ENCODE measurements at regions of chr15 and their contacts with region 1.

Region 1: DNA sequence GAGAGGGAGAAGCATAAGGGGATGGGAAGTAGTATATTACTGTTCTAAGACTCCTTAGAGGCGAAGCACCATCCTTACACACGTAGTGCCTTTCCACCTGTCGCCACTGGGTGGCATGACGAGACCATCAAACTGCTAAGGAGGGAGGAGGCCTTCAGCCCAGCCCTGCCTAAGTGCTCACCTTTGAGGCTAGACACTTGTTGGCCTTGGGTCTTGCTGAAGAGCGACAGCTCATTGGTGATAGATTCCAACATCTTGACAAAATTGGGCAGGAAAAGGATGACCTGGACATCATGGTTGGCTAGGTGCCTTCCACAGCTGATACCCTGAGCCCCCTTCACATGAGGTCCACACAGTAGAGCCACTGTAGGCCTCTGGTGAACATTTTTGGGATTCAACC is 19.6 kb downstream of the CLK3 start:
- DNase-seq: peak; percentile 80
- ATAC-seq: peak; percentile 83
- H3K4me3 Mint-ChIP-seq: no peak overlapping the region
- H3K27ac Mint-ChIP-seq: no peak overlapping the region
- H3K4me1 Mint-ChIP-seq: no peaks in the 10 kb centered on the region
- H3K27me3 Mint-ChIP-seq: no peaks in the 10 kb centered on the region
- CTCF ChIP-seq: peak; percentile 84

Region 2: GRCh38 chr15:74549816-74550215 is 85.4 kb before region 1 on chr15:
- CTCF ChIA-PET with region 1: no interaction called
- POLR2A ChIA-PET with region 1: no interaction called
- DNase-seq: no peak
- ATAC-seq: no peak
- H3K4me3 Mint-ChIP-seq: no peak overlapping the region
- H3K27ac Mint-ChIP-seq: peak overlapping the region; percentile 17
- H3K4me1 Mint-ChIP-seq: peaks cover 30% of the 10 kb centered on the region
- H3K27me3 Mint-ChIP-seq: no peaks in the 10 kb centered on the region
- CTCF ChIP-seq: no peak

Region 3: DNA sequence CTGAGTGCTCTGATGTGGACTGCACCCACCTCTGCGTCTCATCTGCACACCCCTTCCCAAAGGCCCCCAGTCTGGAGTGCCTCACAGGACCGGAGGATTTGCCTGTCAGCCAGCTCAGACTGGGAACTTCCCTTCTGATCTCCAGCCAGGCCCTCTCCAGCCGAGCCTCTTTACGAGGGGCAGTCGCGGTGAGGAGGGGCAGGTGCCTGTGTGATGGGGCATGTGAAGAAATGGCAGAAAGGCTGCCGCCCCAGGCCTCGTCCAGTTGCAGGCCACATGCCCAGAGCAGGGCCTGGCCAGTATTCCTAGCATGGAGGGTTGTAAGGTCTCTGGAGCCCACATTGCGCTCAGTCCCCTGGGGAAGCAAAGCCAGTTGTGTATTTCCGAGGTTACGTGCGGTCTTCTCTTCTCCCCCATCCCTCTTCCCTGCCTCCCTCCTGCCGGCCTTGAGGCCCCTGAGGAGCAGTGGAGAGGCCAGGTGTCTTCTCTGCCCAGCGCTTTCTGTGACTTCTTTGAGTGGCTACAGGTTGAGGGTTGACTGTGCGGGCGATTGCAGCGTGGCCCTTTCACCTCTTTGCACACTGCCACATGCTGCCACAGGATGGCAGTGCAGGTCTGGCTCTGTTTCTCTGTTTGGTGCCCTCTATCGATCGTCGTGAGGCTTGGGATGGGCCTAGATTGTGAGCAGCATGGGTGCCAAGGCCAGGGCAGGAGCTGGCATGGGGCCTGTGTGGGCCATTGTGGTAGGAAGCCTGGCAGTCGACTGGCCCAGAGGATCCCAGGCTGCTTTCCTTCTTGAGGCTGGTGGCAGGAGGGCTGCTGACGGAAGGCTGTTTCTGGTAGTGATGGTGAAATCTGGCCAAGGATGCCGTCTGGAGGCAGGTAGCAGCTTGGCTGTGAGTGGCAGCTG is 14.3 kb before region 1 on chr15:
- CTCF ChIA-PET with region 1: interaction called, 87 read pairs
- POLR2A ChIA-PET with region 1: no interaction called
- DNase-seq: peak; percentile 83
- ATAC-seq: peak; percentile 88
- H3K4me3 Mint-ChIP-seq: no peak overlapping the region
- H3K27ac Mint-ChIP-seq: peak overlapping the region; percentile 70
- H3K4me1 Mint-ChIP-seq: peaks cover 22% of the 10 kb centered on the region
- H3K27me3 Mint-ChIP-seq: no peaks in the 10 kb centered on the region
- CTCF ChIP-seq: peak; percentile 80

Region 4: DNA sequence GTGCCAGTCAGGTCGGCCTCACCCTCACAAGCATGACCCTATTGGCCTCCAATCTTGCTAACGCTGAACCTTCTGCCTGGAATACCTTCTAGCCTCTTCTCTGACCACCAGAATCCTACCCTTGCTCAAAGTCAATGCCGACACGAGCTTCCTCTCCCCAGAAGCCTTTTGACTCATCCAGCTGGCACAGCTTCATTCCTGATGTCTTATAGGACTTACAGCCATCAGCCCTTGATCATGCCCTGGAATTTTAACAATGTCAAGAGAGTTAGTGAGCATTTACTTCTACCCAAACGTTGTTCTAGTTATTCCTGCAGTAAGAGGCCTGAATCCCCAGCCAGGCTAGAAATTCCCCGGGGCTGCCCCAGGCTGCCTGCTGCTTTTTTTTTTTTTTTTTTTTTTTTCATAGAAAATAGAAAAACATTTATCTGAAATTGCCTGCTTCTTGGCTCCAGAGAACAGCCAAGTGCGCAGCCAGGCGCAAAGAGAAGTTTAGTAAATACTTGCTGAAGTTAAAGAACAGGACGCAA is 117.3 kb after region 1 on chr15:
- CTCF ChIA-PET with region 1: interaction called, 32 read pairs
- POLR2A ChIA-PET with region 1: interaction called, 3 read pairs
- DNase-seq: no peak
- ATAC-seq: no peak
- H3K4me3 Mint-ChIP-seq: no peak overlapping the region
- H3K27ac Mint-ChIP-seq: no peak overlapping the region
- H3K4me1 Mint-ChIP-seq: peaks cover 7% of the 10 kb centered on the region; the same call in 1 of the 2 replicates
- H3K27me3 Mint-ChIP-seq: peaks cover 1% of the 10 kb centered on the region; the same call in 1 of the 2 replicates
- CTCF ChIP-seq: no peak

Region 5: GRCh38 chr15:74781431-74782258 is 146.4 kb after region 1 on chr15 and contains the start of gene CSK:
- CTCF ChIA-PET with region 1: interaction called, 16 read pairs
- POLR2A ChIA-PET with region 1: no interaction called
- DNase-seq: peak; percentile 58
- ATAC-seq: peak; percentile 66
- H3K4me3 Mint-ChIP-seq: peak within 1 kb of the TSS; percentile 83
- H3K27ac Mint-ChIP-seq: no peak within 1 kb of the TSS
- H3K4me1 Mint-ChIP-seq: peaks cover 50% of the 10 kb centered on the region
- H3K27me3 Mint-ChIP-seq: peaks cover 26% of the 10 kb centered on the region
- CTCF ChIP-seq: peak; percentile 49; the same call in 1 of the 2 replicates
- total RNA-seq, gene CSK: 55.1 to 55.9 TPM (median 55.3 TPM) in 3 replicates

Region 6: GRCh38 chr15:74799856-74800547 is 164.8 kb after region 1 on chr15:
- CTCF ChIA-PET with region 1: interaction called, 11 read pairs
- POLR2A ChIA-PET with region 1: no interaction called
- DNase-seq: peak; percentile 90
- ATAC-seq: peak; percentile 98
- H3K4me3 Mint-ChIP-seq: no peak overlapping the region
- H3K27ac Mint-ChIP-seq: peak overlapping the region; percentile 36; the same call in 1 of the 2 replicates
- H3K4me1 Mint-ChIP-seq: 0 out of 2 replicates have a peak, but pooled peaks cover 2% of the 10 kb centered on the region
- H3K27me3 Mint-ChIP-seq: no peaks in the 10 kb centered on the region
- CTCF ChIP-seq: peak; percentile 98

Region 7: DNA sequence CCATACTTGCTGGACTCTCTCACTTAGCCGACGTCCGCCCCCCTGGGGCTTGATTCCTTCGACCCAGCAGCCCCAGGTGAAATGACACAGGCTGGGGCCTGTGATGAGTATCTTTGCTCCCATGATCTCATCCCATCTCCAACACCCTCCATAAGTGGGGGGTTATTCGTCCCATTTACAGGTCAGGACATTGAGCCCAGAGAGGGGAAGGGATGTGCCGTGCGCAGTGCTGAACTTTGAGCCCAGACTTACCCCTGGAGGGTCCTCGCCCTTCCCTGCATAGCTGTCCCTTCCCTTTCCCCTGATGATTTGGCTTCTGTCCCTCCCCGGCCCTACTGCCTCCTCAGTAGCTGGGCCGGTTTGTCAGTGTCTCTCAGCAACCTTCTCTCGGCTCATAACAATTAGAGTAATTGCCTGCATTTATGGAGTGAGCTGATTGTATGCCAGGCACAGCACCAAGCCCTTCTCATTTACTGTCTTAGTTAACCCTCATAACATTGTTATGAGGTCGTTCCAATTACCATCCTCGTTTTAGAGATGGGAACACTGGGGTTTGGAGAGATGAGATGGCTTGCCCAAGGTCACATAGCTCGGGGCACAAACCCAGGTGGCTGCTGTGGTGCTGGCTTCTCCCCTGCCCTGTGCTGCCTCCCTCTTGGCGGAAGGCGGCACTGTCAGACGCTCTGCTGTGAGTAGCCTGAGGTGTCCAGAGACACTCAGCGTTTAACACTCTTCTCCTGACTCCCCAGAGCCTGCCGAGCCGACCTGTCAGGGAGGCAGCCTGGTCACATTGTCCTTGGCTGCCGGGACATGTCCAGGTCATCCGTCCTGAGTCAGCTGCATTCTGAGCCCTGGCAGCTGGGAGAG is 181.8 kb after region 1 on chr15:
- CTCF ChIA-PET with region 1: no interaction called
- POLR2A ChIA-PET with region 1: no interaction called
- DNase-seq: no peak
- ATAC-seq: peak; percentile 61
- H3K4me3 Mint-ChIP-seq: no peak overlapping the region
- H3K27ac Mint-ChIP-seq: peak overlapping the region; percentile 79
- H3K4me1 Mint-ChIP-seq: peaks cover 20% of the 10 kb centered on the region
- H3K27me3 Mint-ChIP-seq: no peaks in the 10 kb centered on the region; the same call in 1 of the 2 replicates
- CTCF ChIP-seq: no peak

Measured in WTC11 (cell line).